Ascending aorta (tissue), 2 donors: ENCODE measurements at regions of chr20 and their contacts with region 1.

Region 1: DNA sequence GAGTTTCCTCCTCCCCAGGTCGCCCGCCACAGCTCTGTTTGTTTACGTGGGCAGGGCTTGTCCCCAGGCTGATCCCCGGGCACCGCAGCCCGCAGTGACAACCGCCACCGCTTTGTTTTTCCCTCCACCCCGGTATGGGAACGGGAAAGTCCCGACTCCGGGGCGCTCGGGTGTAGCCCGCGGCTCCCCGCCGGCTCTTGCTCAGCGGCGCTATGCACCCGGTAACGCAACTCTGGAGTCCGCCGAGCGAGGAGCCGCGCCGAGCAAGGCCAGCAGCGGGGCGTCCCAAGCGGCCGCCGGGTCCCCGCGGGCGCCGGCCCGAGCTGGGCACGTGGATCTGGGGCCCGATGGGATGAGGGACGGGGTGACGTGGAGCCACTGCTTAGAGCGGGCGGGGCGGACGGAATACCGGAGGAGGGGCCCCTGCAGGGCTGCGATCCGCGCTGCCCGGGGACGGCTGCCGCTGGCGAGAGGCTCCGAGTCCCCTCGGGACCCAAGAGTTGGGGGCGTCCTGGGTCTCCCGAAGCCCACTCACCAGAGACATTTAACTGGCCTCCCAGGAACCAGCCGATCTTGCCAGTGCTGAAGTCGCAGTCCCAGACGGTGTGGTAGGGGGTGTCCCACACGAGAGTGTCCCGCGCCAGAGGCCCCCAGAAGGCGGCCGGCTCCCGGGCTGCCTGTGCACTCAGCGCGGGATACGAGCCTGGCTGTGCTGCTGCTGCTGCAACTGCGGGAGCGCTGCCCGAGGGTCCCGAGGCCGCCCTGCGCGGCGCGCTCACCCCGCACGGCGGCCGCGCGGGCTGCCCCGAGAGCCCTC is 497 bp downstream of the ACSS1 start:
- DNase-seq: peak in 1 of 2 donors; percentile 85
- H3K4me3 ChIP-seq: peak overlapping the region; percentile 90 to 91
- H3K27ac ChIP-seq: peak overlapping the region; percentile 92 to 96
- H3K4me1 ChIP-seq: peaks cover 35 to 47% of the 10 kb centered on the region in 2 donors
- H3K27me3 ChIP-seq: no peaks in the 10 kb centered on the region
- CTCF ChIP-seq: no peak

Region 2: DNA sequence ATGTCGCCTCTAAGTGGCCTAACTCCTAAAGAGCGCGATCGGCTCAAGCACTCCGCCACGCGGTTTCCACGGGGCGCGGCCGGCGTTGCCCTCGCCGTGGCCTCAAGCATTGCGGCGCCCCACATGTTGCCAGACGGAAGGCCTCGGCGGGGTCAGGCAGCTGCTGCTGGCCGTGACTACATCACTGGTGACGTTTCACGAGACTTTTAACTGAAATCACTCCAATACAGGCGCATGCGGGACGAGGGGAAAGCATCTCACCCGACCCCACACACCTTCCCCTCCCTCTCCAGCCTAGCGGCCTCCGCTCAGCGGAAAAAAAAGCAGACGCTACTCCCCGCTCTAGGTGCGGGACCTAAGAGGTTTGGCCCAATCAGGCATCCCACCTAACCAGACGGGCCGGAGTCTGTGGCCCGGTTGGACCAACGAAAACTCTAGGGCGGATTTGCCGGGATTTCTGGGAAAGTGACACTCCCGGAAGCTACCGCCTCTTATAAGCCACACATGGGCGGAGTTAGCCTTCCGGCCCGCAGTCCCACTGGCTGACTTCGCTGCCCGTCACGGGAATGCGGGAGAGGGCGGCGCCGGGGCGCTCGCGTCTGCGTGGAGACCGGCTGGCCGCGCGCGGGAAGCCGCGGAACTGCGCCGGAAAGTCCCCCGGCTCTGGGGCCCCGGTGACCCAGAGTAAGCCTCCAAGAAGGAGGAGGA is 1707.1 kb before region 1 on chr20 and contains the start of gene NXT1:
- intact Hi-C with region 1: loop called (anchors 10 kb)
- DNase-seq: peak; percentile 93 to 99
- H3K4me3 ChIP-seq: peak within 1 kb of the TSS; percentile 93 to 97
- H3K27ac ChIP-seq: peak within 1 kb of the TSS; percentile 99 to 100
- H3K4me1 ChIP-seq: peaks cover 3 to 18% of the 10 kb centered on the region in 2 donors
- H3K27me3 ChIP-seq: no peaks in the 10 kb centered on the region
- CTCF ChIP-seq: peak in 1 of 3 experiments; percentile 0
- total RNA-seq, gene NXT1: 50.0 TPM

Region 3: DNA sequence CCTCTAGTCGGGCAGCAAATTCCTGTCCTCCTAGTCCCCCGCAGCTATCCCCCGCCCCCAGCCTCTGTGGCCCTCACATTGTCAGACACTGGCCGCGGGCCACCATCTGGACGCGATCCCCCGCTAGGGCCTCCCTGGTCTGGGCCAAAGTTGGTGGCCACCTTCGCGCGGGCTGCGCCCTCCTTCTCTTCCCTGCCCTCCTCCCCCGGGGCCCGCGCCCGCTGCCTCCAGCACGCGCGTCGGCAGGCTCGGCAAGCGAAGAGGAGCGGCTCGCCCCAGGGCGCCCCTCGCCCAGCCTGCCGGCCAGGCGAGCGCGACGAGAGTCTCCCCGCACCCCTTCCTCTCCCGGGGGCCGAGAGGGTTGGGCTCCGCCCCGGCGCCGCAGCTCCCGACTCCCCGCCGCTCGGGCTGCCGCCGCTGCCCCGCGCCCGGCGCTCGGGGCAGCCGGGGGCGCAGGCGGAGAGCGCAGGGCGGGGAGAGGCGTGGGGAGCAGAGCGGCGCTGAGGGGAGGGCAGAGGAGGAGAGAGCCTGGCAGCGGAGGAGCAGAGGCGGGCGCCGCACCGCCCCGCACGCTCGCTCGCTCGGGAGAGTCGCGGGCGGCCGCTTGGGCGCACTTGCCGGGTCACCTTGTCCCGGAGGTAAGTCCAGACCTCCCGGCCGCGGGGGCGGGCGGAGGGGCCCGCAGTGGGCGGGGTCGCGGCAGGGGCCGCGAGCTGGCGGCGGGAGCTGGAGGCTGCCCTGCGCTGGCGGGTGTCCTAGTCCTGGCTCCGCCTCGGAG is 588.1 kb before region 1 on chr20 and contains the start of gene SYNDIG1:
- intact Hi-C with region 1: loop called (anchors 10 kb)
- DNase-seq: peak in 1 of 2 donors; percentile 70
- H3K4me3 ChIP-seq: peak within 1 kb of the TSS; percentile 71 to 84
- H3K27ac ChIP-seq: peak within 1 kb of the TSS; percentile 80 to 82
- H3K4me1 ChIP-seq: peaks cover 0 to 10% of the 10 kb centered on the region in 2 donors
- H3K27me3 ChIP-seq: no peaks in the 10 kb centered on the region
- CTCF ChIP-seq: no peak
- total RNA-seq, gene SYNDIG1: 13.7 TPM

Region 4: GRCh38 chr20:24768201-24768636 is 289.2 kb before region 1 on chr20:
- intact Hi-C with region 1: no loop called
- DNase-seq: peak in 1 of 2 donors; percentile 48
- H3K4me3 ChIP-seq: no peak overlapping the region
- H3K27ac ChIP-seq: no peak overlapping the region
- H3K4me1 ChIP-seq: no peaks in the 10 kb centered on the region
- H3K27me3 ChIP-seq: no peaks in the 10 kb centered on the region
- CTCF ChIP-seq: no peak

Region 5: GRCh38 chr20:25227317-25227831 is 169.9 kb after region 1 on chr20:
- intact Hi-C with region 1: loop called (anchors 2 kb)
- DNase-seq: peak in 1 of 2 donors; percentile 80
- H3K4me3 ChIP-seq: no peak overlapping the region
- H3K27ac ChIP-seq: peak overlapping the region; percentile 93 to 97
- H3K4me1 ChIP-seq: peaks cover 16 to 39% of the 10 kb centered on the region in 2 donors
- H3K27me3 ChIP-seq: no peaks in the 10 kb centered on the region
- CTCF ChIP-seq: no peak

Region 6: DNA sequence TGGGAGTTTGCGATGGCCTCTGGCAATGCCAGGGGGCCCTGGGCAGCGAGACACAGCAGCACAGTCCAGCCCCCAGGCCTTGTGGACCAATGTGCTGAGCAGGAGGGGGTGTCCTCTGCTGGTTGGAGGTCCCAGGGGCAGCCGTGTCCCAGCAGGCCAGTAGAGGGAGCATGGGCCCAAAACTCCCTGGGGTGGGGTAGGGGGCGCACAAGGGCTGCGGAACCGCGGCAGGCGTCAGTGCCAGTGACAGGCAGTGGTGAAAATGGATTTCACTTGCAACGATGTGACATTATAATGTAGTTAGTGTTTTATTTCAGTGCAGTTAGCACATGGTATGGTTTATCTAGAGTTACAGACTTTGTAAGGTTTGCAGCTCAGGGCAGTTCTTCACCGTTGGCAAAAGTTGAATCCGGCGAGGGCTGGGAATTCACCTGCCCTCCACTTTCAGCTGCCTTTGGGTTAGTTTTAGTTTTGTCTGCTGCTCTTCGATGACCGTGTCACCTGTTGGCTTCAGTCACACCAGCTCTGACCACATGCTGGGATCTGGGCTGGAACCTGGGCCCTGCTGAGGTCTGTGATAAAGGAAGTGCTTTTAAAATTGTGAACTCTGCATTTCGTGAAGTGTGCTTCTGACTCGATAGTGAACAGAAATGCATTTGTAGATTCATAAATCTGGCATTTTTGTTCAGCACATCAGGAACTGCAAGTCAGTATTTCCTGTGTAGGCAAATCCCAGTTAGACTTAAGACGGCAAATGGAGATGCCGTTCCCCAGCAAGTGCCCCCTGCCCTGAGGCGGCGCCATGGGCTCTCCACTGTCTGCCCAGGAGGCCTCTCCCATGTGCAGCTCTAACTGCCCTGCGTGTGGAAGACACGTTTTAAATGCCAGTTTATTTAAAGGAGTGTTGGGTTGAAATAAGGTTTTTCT is 237.3 kb after region 1 on chr20:
- intact Hi-C with region 1: loop called (anchors 5 kb)
- DNase-seq: no peak
- H3K4me3 ChIP-seq: no peak overlapping the region
- H3K27ac ChIP-seq: peak overlapping the region; percentile 61 to 64
- H3K4me1 ChIP-seq: peaks cover 7 to 27% of the 10 kb centered on the region in 2 donors
- H3K27me3 ChIP-seq: no peaks in the 10 kb centered on the region
- CTCF ChIP-seq: peak; percentile 57 to 80 (median 66)

Region 7: DNA sequence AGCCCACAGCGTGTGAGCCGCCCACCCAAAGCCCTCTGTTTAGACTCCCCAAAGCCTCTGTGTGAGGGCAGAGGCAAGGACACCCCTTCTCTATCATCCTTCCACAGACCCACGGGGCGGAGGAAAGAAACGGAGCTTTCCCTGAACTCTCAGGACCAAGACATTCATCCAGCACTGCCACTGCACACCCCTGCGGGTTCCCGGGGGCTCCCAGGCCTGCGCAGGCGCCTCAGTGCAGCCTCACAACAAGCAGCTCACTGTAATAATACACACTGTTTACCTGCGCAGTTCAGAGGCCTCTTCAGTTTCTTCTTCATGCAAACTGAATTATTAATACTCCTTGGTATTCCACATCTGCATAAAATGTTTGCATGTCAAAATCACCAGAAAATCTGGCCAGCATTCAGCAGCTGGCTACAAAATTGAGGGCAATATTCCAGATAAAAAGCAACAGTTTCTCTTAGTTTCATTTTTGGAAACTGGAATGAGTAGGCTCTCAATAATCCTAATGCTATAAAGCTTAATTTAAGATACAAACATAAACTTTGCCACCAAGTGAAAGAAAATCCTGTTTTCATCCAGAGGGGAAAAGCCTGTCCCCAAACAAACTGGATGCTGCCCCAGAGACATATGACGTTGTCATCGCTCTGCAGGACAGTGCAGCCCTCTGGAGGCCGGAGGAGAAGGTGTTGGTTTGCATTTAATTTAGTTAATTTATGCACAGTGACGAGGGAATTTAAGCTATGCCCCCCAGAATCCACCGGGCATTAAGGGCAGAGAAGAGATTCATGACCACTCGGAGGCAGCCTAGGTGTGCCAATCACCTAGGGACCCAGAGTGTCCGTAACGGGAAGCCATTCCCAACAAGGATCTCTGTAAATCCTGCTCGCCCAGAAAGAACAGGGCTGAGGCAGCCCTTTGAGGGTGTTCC is 482.6 kb after region 1 on chr20:
- intact Hi-C with region 1: loop called (anchors 10 kb)
- DNase-seq: no peak
- H3K4me3 ChIP-seq: peak overlapping the region; percentile 36 to 63
- H3K27ac ChIP-seq: peak overlapping the region; percentile 45 to 65
- H3K4me1 ChIP-seq: peaks cover 8 to 34% of the 10 kb centered on the region in 2 donors
- H3K27me3 ChIP-seq: no peaks in the 10 kb centered on the region
- CTCF ChIP-seq: peak; percentile 31 to 61 (median 42)